GM12878 (cell line): ENCODE measurements at regions of chr16 and their contacts with region 1.

Region 1: DNA sequence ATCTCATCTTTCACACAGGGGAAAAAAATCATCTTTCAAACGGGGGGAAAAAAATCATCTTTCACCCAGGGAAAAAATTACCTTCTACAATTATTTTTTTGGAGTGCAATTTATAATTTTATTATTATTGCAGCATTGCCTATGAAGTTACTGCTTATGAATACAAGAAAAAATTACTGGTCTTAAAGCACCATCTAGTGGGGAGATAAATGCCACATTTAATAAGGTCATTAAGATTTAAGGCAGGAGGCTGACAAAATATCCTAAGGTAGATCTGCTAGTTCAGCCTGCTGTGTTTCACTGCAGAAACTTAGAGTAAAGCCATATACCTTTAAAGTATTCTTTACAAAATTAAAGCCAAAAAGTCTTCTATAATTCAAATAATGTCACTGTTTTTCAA is 13.7 kb downstream of the SHCBP1 start:
- DNase-seq: no peak
- ATAC-seq: peak; percentile 50; the same call in 2 of the 3 replicates
- H3K4me3 ChIP-seq: no peak overlapping the region
- H3K27ac ChIP-seq: no peak overlapping the region
- H3K4me1 ChIP-seq: peaks cover 4% of the 10 kb centered on the region
- H3K27me3 ChIP-seq: no peaks in the 10 kb centered on the region
- CTCF ChIP-seq: peak; percentile 12 to 46 (median 28); a peak in 2 of 6 replicates
- EP300 ChIP-seq: no peak
- POLR2A ChIP-seq: no peak
- RAD21 ChIP-seq: peak; percentile 64; the same call in 1 of the 2 replicates

Region 2: GRCh38 chr16:46555951-46556350 is 51.6 kb before region 1 on chr16:
- CTCF ChIA-PET with region 1: interaction called, 47 read pairs
- POLR2A ChIA-PET with region 1: no interaction called
- RAD21 ChIA-PET with region 1: interaction called, 3 read pairs
- SMC1A ChIA-PET with region 1: interaction called, 13 read pairs
- in situ Hi-C with region 1: no loop called
- intact Hi-C with region 1: loop called (anchors 5 kb)
- DNase-seq: no peak
- ATAC-seq: no peak
- H3K4me3 ChIP-seq: no peak overlapping the region
- H3K27ac ChIP-seq: no peak overlapping the region
- H3K4me1 ChIP-seq: no peaks in the 10 kb centered on the region
- H3K27me3 ChIP-seq: no peaks in the 10 kb centered on the region
- CTCF ChIP-seq: no peak
- EP300 ChIP-seq: no peak
- POLR2A ChIP-seq: no peak
- RAD21 ChIP-seq: no peak

Region 3: DNA sequence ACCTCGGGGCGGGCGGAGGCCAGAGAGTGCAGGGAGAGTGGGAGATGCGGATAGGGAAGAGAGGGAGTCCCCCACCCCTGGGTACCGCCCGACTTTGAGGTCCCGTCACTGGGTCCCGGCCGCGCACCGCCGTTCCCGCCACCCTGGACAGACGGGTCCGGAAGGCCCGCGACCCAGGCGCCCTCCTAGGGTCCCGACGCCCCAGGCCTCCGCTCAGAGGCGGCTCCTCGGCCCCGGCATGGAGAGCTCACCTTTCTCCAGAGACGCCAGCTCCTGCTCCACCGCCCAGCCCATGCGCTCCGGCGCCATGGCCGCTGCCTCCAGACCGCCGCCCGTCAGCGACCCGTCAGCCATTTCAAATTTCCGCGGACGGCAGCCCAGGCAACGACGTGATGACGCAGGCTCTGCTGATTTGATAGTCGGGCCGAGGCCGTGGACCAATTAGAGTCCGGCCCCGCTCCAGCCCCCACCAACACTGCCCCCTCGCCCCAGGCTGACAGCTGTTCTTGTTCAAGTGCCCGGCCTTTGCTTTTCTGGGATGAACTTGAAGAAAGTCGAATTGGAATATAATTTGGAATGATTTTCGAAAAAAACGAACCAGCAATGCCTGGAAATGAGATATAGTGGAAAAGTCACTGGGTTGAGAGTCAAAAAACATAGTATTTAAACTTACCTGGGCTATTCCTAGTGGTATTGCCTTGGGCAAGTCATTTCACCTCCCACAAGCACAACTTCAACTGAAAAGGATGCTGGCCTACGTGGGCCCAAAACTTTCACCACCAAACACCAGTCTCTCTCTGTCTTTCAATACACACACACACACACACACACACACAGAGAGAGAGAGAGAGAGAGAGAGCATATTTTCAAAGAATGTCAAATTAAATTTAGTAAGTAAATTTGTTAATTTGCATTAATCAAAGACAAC is 13.7 kb after region 1 on chr16 and contains the start of gene SHCBP1:
- CTCF ChIA-PET with region 1: interaction called, 14 read pairs
- POLR2A ChIA-PET with region 1: interaction called, 4 read pairs
- RAD21 ChIA-PET with region 1: interaction called, 4 read pairs
- SMC1A ChIA-PET with region 1: interaction called, 4 read pairs
- in situ Hi-C with region 1: no loop called
- intact Hi-C with region 1: no loop called
- DNase-seq: peak; percentile 52
- ATAC-seq: peak; percentile 95
- H3K4me3 ChIP-seq: peak within 1 kb of the TSS; percentile 85
- H3K27ac ChIP-seq: peak within 1 kb of the TSS; percentile 91
- H3K4me1 ChIP-seq: peaks cover 11% of the 10 kb centered on the region
- H3K27me3 ChIP-seq: no peaks in the 10 kb centered on the region
- CTCF ChIP-seq: no peak
- EP300 ChIP-seq: no peak
- POLR2A ChIP-seq: peak; percentile 94
- RAD21 ChIP-seq: no peak
- polyA plus RNA-seq, gene SHCBP1: 9.5 to 17.5 TPM

Region 4: GRCh38 chr16:46706642-46707041 is 99.1 kb after region 1 on chr16:
- CTCF ChIA-PET with region 1: no interaction called
- POLR2A ChIA-PET with region 1: no interaction called
- RAD21 ChIA-PET with region 1: no interaction called
- SMC1A ChIA-PET with region 1: no interaction called
- in situ Hi-C with region 1: no loop called
- intact Hi-C with region 1: no loop called
- DNase-seq: no peak
- ATAC-seq: no peak
- H3K4me3 ChIP-seq: no peak overlapping the region
- H3K27ac ChIP-seq: no peak overlapping the region
- H3K4me1 ChIP-seq: no peaks in the 10 kb centered on the region
- H3K27me3 ChIP-seq: no peaks in the 10 kb centered on the region
- CTCF ChIP-seq: no peak
- EP300 ChIP-seq: no peak
- POLR2A ChIP-seq: no peak
- RAD21 ChIP-seq: no peak

Region 5: GRCh38 chr16:46929378-46930332 is 322.1 kb after region 1 on chr16:
- CTCF ChIA-PET with region 1: no interaction called
- POLR2A ChIA-PET with region 1: no interaction called
- RAD21 ChIA-PET with region 1: no interaction called
- SMC1A ChIA-PET with region 1: no interaction called
- in situ Hi-C with region 1: no loop called
- intact Hi-C with region 1: no loop called
- DNase-seq: no peak
- ATAC-seq: peak; percentile 97
- H3K4me3 ChIP-seq: no peak overlapping the region
- H3K27ac ChIP-seq: no peak overlapping the region
- H3K4me1 ChIP-seq: no peaks in the 10 kb centered on the region
- H3K27me3 ChIP-seq: no peaks in the 10 kb centered on the region
- CTCF ChIP-seq: peak; percentile 88 to 91 (median 91)
- EP300 ChIP-seq: no peak
- POLR2A ChIP-seq: no peak
- RAD21 ChIP-seq: peak; percentile 81